Left cardiac atrium (tissue), 4 donors: ENCODE measurements at regions of chr16 and their contacts with region 1.

Region 1: GRCh38 chr16:72947379-72948237 is 100.3 kb downstream of the ZFHX3 start:
- DNase-seq: peak; percentile 57
- ATAC-seq: peak; percentile 17 to 36

Region 2: GRCh38 chr16:72847187-72848027 is 100.2 kb before region 1 on chr16:
- intact Hi-C with region 1: loop called in 1 of 2 experiments (anchors 5 kb)
- DNase-seq: no peak
- ATAC-seq: peak; percentile 12 to 25

Region 3: DNA sequence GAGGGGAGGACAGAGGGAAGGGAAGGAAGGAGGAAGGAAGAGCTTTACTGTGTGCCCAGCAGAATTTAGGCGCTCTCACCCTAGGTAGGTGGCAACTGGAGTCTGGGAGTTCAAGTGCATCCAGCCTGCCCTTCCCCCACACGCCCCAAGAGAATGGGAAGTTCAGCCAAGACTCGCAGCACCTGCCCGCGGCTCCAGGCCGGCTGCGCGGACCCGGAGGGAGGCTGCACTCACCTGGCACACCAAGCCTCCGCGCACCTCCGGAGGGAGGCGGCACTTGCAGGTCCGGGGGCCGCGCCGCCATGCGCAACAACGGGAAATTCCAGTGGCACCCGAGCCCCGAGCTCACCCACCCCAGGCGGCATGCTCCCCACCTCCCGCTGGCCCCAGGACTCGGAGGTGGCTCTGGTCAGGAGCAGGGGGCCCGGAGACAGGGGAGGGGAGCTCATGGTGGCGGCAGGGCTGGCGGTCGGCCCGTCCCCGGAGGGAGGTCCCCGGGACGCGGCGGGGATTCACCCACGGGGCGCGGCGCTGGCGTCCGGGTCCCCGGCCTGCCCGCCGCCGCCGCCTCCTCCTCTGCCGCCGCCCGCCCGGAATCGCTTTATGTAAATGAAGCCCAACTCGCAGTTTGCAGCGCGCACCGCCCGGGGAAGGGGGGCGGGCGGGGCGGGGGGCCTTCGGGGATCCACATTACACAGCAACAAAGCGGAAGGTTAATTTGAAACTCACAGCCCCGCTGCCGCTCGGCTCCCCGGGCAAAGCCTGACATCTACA is 100.1 kb after region 1 on chr16 and contains the start of gene ZFHX3:
- intact Hi-C with region 1: loop called in 1 of 2 experiments (anchors 2 kb)
- DNase-seq: peak; percentile 77
- ATAC-seq: peak; percentile 70 to 78
- total RNA-seq, gene ZFHX3: 11.9 to 12.6 TPM